ENCODE measurements at regions of chr7 and their contacts with region 1.

Region 1: GRCh38 chr7:13757841-13758240 is 231.6 kb downstream of the ETV1 start:
- DNase-seq: no peak
- ATAC-seq: no peak
- H3K4me3 ChIP-seq: no peak overlapping the region
- H3K4me3 Mint-ChIP-seq: no peak overlapping the region
- H3K27ac ChIP-seq: no peak overlapping the region
- H3K27ac Mint-ChIP-seq: no peak overlapping the region
- H3K4me1 ChIP-seq: no peaks in the 10 kb centered on the region
- H3K4me1 Mint-ChIP-seq: no peaks in the 10 kb centered on the region
- H3K27me3 ChIP-seq: no peaks in the 10 kb centered on the region
- H3K27me3 Mint-ChIP-seq: no peaks in the 10 kb centered on the region

Region 2: DNA sequence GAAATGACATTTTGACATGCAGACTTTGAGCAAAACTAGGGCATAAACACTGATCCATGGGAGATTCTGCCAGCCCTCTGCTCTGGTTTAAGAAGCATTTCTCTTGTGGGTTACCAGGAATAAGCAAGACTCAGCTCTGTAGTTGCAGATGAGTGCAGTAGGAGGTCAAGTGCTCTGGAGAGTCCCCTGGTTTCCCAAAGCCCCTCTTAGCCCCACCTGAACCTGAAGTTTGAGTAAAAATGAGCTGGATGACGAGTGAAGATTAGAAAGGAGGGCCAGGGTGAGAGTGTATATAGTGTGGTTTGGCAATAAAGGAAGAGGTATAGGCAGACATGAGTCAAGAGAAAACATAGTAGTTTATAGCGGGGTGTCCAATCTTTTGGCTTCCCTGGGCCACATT is 850.1 kb before region 1 on chr7:
- CTCF ChIA-PET with region 1: no interaction called
- POLR2A ChIA-PET with region 1: no interaction called
- intact Hi-C with region 1: no loop called
- DNase-seq: no peak
- ATAC-seq: no peak
- H3K4me3 ChIP-seq: no peak overlapping the region
- H3K4me3 Mint-ChIP-seq: no peak overlapping the region
- H3K27ac ChIP-seq: no peak overlapping the region
- H3K27ac Mint-ChIP-seq: no peak overlapping the region
- H3K4me1 ChIP-seq: no peaks in the 10 kb centered on the region
- H3K4me1 Mint-ChIP-seq: no peaks in the 10 kb centered on the region
- H3K27me3 ChIP-seq: no peaks in the 10 kb centered on the region
- H3K27me3 Mint-ChIP-seq: peaks cover 0 to 8% (median 0%) of the 10 kb centered on the region in 5 donors

Region 3: DNA sequence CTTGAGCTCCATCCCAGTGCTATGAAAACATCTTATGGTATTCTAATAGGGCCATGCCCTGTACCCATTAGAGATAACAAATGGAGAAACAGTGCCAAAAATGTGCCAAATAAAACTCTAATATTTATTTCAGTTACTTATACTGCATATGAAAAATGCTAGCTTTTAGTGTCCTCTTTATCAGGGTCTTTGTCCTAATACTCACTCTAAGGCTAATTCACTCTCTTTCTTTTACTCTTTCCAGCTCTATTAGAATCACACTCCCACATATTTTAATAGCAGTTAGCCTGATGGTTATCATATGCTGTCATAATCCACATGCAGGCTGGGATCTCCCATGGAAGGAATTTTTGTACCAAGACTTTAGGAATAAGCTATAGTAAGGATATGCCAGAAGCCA is 176.7 kb before region 1 on chr7:
- CTCF ChIA-PET with region 1: no interaction called
- POLR2A ChIA-PET with region 1: no interaction called
- intact Hi-C with region 1: no loop called
- DNase-seq: no peak
- ATAC-seq: no peak
- H3K4me3 ChIP-seq: no peak overlapping the region
- H3K4me3 Mint-ChIP-seq: no peak overlapping the region
- H3K27ac ChIP-seq: no peak overlapping the region
- H3K27ac Mint-ChIP-seq: no peak overlapping the region
- H3K4me1 ChIP-seq: no peaks in the 10 kb centered on the region
- H3K4me1 Mint-ChIP-seq: no peaks in the 10 kb centered on the region
- H3K27me3 ChIP-seq: no peaks in the 10 kb centered on the region
- H3K27me3 Mint-ChIP-seq: no peaks in the 10 kb centered on the region

Region 4: GRCh38 chr7:13708675-13709074 is 49.2 kb before region 1 on chr7:
- CTCF ChIA-PET with region 1: no interaction called
- POLR2A ChIA-PET with region 1: no interaction called
- intact Hi-C with region 1: loop called in 1 of 2 experiments (anchors 5 kb)
- DNase-seq: no peak
- ATAC-seq: no peak
- H3K4me3 ChIP-seq: no peak overlapping the region
- H3K4me3 Mint-ChIP-seq: no peak overlapping the region
- H3K27ac ChIP-seq: no peak overlapping the region
- H3K27ac Mint-ChIP-seq: no peak overlapping the region
- H3K4me1 ChIP-seq: no peaks in the 10 kb centered on the region
- H3K4me1 Mint-ChIP-seq: no peaks in the 10 kb centered on the region
- H3K27me3 ChIP-seq: no peaks in the 10 kb centered on the region
- H3K27me3 Mint-ChIP-seq: no peaks in the 10 kb centered on the region

Measured in naive thymus-derived CD4-positive, alpha-beta T cell (primary cell).